Activated CD4-positive, alpha-beta T cell treated with anti-CD3 and anti-CD28 coated beads for 36 hours (primary cell): ENCODE measurements at regions of chr1 and their contacts with region 1.

Region 1: DNA sequence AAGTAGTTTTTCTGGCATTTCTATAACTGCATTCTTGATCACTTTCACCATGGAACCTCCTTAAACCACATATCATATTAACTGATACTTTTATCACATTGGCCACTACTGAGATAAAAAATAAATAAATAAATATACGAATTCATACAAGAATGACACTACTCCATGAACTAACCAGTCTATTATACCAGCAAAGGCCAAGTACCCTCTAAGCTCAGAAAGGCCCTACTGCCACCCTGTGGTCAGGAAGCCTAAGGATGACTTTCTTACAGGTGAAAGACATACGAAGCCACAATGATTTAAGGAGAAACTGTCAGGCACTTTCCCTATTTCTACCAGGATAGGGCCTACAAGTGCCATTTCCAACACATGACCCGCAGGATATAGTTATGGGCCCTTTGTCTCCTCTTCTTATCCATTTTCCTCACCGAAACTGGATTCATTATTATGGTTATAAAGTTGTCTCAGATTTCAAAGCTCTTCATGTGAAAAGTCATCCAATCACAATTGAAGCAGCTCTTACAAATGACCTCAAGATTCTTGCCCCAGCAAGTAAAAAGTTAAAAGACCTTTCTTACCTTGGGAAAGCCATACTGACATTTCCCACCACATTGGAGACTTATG is 23.9 kb downstream of the DNAJC8 start:
- DNase-seq: peak; percentile 79
- ATAC-seq: peak; percentile 87
- H3K4me3 Mint-ChIP-seq: no peak overlapping the region
- H3K27ac Mint-ChIP-seq: no peak overlapping the region
- H3K4me1 Mint-ChIP-seq: peaks cover 5% of the 10 kb centered on the region
- H3K27me3 Mint-ChIP-seq: no peaks in the 10 kb centered on the region

Region 2: DNA sequence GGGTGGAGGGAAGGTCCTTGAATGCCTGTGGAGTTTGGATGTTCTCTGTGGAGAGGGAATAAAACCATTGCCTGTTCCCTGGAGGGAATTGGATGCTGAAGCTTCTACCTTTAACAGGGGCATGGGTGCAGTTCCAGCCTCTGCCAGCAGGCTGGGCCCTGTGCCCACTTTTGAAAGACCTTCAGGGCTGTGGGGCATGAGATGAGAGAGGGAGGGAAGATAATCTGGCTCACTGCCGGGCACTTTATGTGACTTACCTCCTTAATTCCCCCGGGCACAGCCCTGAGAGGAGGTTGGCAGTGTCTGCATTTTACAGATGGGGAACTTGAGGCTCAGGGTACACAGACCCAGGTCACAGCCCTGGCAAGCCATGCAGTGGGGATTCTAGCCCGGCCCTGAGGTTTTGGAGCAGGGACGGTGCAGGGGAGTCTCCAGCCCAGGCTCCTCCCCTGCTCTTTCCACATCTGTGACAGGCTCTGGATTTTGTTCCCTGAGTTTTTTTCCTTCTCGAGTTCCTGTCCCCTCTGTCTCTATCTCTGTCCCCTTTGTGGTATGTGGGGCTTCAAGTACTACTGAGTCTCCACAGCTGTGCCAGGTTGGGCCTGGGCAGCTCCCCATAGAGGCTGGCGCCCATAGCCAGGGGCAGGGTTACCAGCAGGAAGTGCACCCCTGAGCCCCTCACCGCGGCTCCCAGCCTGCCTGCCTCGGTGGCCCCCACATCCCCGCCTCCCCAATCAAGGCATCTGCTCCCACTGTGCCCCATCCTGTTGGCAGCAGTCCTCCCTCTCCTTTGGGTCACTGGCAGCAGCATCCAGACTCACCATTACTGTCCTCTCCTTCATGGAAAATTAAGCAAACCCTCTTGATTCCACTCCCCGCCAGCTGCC is 350.6 kb before region 1 on chr1:
- CTCF ChIA-PET with region 1: interaction called, 5 read pairs
- POLR2A ChIA-PET with region 1: no interaction called
- intact Hi-C with region 1: loop called (anchors 1 to 2 kb)
- DNase-seq: peak; percentile 90
- ATAC-seq: peak; percentile 97
- H3K4me3 Mint-ChIP-seq: no peak overlapping the region
- H3K27ac Mint-ChIP-seq: no peak overlapping the region
- H3K4me1 Mint-ChIP-seq: peaks cover 9% of the 10 kb centered on the region
- H3K27me3 Mint-ChIP-seq: no peaks in the 10 kb centered on the region

Region 3: DNA sequence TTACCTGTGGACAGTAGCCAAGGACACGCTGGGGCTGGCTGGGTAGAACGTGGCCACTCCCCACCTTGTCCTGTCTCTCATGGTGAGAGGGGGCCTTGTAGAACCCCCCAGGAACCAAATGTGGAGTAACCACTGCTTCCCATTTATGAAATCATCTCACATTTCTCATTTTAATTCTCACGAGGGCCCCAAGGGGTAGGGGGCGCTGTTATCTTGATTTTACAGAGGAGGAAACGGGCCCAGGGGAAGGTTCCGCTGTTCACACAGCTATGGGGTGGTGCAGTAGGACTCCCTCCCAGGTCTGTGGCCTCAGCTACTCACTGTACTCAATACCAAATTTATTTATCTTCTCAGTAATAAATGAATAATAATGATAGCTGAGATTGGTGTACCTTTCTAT is 268.6 kb before region 1 on chr1:
- CTCF ChIA-PET with region 1: interaction called, 7 read pairs
- POLR2A ChIA-PET with region 1: no interaction called
- intact Hi-C with region 1: loop called in 1 of 2 experiments (anchors 1 kb)
- DNase-seq: peak; percentile 88
- ATAC-seq: peak; percentile 90
- H3K4me3 Mint-ChIP-seq: no peak overlapping the region
- H3K27ac Mint-ChIP-seq: peak overlapping the region; percentile 55
- H3K4me1 Mint-ChIP-seq: peaks cover 24% of the 10 kb centered on the region
- H3K27me3 Mint-ChIP-seq: peaks cover 7% of the 10 kb centered on the region

Region 4: GRCh38 chr1:27979151-27979858 is 229.6 kb before region 1 on chr1:
- CTCF ChIA-PET with region 1: no interaction called
- POLR2A ChIA-PET with region 1: no interaction called
- intact Hi-C with region 1: loop called in 1 of 2 experiments (anchors 10 kb)
- DNase-seq: no peak
- ATAC-seq: peak; percentile 90
- H3K4me3 Mint-ChIP-seq: no peak overlapping the region
- H3K27ac Mint-ChIP-seq: peak overlapping the region; percentile 34
- H3K4me1 Mint-ChIP-seq: no peaks in the 10 kb centered on the region
- H3K27me3 Mint-ChIP-seq: no peaks in the 10 kb centered on the region

Region 5: GRCh38 chr1:28056129-28056925 is 152.6 kb before region 1 on chr1:
- CTCF ChIA-PET with region 1: interaction called, 14 read pairs
- POLR2A ChIA-PET with region 1: no interaction called
- intact Hi-C with region 1: no loop called
- DNase-seq: peak; percentile 85
- ATAC-seq: peak; percentile 85
- H3K4me3 Mint-ChIP-seq: peak overlapping the region; percentile 1
- H3K27ac Mint-ChIP-seq: peak overlapping the region; percentile 83
- H3K4me1 Mint-ChIP-seq: peaks cover 47% of the 10 kb centered on the region
- H3K27me3 Mint-ChIP-seq: no peaks in the 10 kb centered on the region

Region 6: DNA sequence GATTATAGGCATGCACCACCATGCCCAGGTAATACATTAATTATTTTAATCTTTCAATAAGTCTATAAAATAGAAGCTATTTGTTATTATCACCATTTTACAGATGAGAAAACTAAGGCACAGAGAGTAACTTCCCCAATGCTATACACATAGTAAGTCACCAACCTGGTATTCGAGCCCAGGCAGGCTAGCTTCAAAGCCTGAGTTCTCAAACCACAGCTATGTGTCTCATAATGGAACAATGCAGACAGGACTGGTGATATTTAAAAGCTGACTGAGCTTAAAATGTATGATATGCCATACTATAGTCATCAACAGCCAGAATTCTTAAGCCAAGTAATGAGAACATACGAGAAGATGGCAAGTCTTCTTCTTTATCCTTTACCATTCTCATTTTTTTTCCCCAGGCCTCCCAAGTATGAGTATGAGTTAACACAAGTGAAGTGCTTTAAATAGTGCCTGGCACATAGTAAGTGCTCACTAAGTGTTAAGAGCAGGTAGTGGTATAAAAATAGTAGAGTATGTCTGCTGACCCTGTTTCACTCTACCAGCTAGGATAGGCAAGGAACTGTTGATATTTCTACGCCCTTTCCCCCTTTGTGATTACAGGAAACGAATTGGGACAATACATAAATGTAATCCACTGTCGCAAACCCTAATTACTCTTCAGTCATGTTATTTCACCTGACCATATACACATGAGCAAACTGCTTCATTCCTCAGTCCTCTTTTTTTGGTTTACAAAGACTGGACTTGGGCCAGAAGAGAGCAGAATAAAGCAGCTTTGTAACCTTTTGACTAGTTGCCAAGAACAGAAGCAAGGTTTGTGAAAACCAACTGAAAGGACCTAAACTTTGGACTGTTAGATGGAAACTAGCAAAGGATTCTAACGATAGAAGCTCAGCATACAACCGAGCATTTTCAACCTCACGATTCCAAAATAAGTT is 130.0 kb before region 1 on chr1:
- CTCF ChIA-PET with region 1: interaction called, 10 read pairs
- POLR2A ChIA-PET with region 1: interaction called, 3 read pairs
- intact Hi-C with region 1: no loop called
- DNase-seq: no peak
- ATAC-seq: no peak
- H3K4me3 Mint-ChIP-seq: no peak overlapping the region
- H3K27ac Mint-ChIP-seq: no peak overlapping the region
- H3K4me1 Mint-ChIP-seq: peaks cover 20% of the 10 kb centered on the region
- H3K27me3 Mint-ChIP-seq: no peaks in the 10 kb centered on the region

Region 7: DNA sequence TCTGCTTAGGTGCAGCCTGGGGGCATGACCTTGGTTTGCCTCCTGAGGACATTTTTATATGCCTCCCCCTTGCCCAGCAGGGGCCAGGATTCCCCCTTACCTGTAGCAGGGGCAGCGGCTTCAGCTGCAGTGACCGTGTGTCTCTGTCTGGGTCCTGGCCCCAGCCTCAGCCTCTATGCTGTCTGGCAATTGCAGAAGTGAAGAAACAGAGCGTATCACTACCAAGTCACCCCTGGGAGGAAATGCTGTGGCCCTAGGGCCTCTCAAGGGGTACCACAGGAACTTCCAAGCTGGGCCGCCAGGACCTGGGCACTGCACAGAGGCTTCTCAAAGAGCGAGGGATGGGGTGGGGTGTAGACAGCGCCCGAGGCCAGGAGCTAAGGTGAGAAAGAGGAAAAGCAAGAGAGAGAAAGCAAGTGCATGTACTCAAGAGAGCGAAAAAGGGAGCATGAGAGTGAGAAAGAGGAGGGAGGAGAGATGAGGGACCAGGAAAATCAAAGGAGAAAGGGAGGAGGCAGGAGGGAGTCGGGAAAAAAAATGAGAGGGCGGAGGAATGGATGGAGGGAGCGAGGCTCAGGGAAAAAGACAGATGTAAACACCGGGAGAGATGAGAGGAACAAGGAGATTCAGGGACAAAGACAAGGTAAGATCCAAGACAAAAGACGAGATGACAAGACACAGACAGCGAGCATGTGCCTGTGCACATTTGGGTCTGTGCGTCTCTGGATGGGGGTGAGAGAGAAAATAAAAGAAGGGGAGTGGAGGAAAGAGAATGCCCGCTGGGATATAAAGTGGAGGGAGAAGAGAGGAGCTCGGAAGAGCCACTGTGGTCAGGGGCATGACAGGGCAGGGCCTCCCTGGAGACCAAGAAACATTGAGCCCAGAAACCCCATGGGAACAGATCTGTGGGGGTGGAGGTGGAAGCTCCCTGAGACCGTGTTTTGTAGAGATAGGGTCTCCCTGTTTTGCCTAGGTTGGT is 32.1 kb before region 1 on chr1 and contains the start of gene PTAFR:
- CTCF ChIA-PET with region 1: no interaction called
- POLR2A ChIA-PET with region 1: no interaction called
- intact Hi-C with region 1: no loop called
- DNase-seq: no peak
- ATAC-seq: no peak
- H3K4me3 Mint-ChIP-seq: no peak within 1 kb of the TSS
- H3K27ac Mint-ChIP-seq: no peak within 1 kb of the TSS
- H3K4me1 Mint-ChIP-seq: peaks cover 28% of the 10 kb centered on the region
- H3K27me3 Mint-ChIP-seq: peaks cover 52% of the 10 kb centered on the region
- total RNA-seq, gene PTAFR: 0.14 to 0.19 TPM